ENCODE measurements at regions of chr18 and their contacts with region 1.

Region 1: DNA sequence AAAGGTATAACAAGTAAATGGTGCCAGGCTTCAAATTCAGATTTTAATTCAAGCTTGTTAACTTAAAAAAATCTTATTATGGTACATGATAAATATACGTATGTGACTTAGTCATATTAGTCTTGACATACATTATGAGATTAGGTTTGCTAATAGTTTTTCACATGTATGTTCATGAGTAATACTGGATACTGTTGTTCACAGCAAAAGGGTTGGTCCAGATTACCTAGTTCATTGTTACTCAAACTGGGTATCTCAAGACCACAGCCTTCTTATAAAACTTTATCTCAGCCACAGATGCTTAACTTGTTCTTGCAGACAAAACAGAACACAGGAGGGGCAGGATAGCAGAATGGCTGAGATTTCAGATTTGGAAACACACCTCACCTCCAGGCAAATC is 26.8 kb downstream of the VPS4B start:
- DNase-seq: no peak
- H3K4me3 Mint-ChIP-seq: no peak overlapping the region
- H3K27ac Mint-ChIP-seq: no peak overlapping the region
- H3K4me1 Mint-ChIP-seq: peaks cover 6% of the 10 kb centered on the region
- H3K27me3 Mint-ChIP-seq: no peaks in the 10 kb centered on the region

Region 2: GRCh38 chr18:63378919-63379638 is 16.4 kb before region 1 on chr18:
- intact Hi-C with region 1: loop called (anchors 2 kb)
- DNase-seq: no peak
- H3K4me3 Mint-ChIP-seq: peak overlapping the region; percentile 68
- H3K27ac Mint-ChIP-seq: peak overlapping the region; percentile 82
- H3K4me1 Mint-ChIP-seq: peaks cover 22% of the 10 kb centered on the region
- H3K27me3 Mint-ChIP-seq: no peaks in the 10 kb centered on the region

Measured in activated CD4-positive, alpha-beta T cell treated with anti-CD3 and anti-CD28 coated beads, Interleukin-2, amount 10 ng/mL, durations not matched to agents 24 days and 14 days (primary cell).